ENCODE measurements at regions of chr11 and their contacts with region 1.

Region 1: DNA sequence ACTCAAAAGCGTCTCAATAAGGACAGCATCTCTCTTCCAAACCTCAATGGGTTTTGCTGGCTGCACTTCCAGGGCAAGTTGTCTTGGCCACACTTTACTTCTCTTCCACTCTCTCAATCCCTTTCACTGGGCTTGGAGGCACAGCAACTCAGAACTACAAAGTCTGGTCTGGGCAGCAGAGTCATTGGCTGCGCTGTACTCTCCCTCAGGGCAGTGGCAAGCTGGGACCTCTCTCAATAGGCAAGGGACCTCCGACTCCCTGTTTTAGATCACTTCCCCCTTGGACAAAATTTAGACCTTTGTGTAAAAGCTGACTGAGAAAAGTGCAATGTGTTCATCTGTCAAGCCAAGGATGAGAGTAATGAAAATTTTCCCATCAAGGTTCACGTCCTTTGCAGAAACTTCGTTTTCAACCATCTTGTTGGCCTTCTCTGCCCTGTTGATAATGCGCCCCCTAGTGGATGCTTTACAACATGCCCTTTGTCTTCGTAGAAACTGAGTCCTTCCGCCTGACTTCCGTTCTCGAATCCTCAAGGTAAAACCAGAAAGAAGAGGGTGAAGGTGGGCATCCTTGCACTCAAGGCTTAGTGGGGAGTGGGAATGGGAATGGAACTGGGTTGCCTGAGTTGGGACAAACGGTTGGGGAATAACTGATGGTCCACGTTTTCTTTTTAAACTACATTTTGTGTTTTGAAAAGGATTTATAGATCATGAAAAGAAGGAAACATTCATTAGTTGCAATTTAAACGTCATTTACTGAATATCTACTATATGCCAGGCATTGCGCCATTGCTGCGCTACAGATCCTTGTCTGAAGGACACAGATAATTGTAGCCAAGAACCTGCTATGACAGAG is 99.1 kb downstream of the CD44 start:
- DNase-seq: peak in 2 of 5 donors; percentile 21 to 30
- H3K4me3 ChIP-seq: no peak overlapping the region
- H3K27ac ChIP-seq: no peak overlapping the region
- H3K4me1 ChIP-seq: no peaks in the 10 kb centered on the region
- H3K27me3 ChIP-seq: no peaks in the 10 kb centered on the region
- CTCF ChIP-seq: peak in 2 of 3 donors; percentile 34 to 40
- EP300 ChIP-seq: no peak
- POLR2A ChIP-seq: no peak

Region 2: DNA sequence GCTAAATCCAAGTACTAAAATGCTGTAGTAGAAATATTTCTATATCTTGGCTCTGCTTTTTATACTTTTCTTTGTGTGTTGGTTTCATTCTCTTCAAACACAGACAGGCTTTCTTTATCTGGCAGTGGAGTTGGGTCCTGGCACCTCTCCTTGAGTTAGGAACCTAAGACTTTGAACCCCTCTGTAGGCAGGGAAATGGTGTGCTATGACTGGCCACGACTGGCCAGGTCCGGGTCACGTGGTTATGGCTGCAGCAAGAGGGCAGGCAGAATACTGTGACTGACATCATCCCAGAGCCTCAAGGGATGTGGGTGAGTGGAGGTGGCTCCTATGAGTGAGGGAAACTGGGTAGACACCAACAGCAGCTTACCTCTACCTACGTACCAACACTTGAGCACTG is 363.9 kb before region 1 on chr11:
- intact Hi-C with region 1: no loop called
- DNase-seq: no peak
- H3K4me3 ChIP-seq: no peak overlapping the region
- H3K27ac ChIP-seq: no peak overlapping the region
- H3K4me1 ChIP-seq: no peaks in the 10 kb centered on the region
- H3K27me3 ChIP-seq: no peaks in the 10 kb centered on the region
- CTCF ChIP-seq: no peak
- EP300 ChIP-seq: no peak
- POLR2A ChIP-seq: no peak

Region 3: DNA sequence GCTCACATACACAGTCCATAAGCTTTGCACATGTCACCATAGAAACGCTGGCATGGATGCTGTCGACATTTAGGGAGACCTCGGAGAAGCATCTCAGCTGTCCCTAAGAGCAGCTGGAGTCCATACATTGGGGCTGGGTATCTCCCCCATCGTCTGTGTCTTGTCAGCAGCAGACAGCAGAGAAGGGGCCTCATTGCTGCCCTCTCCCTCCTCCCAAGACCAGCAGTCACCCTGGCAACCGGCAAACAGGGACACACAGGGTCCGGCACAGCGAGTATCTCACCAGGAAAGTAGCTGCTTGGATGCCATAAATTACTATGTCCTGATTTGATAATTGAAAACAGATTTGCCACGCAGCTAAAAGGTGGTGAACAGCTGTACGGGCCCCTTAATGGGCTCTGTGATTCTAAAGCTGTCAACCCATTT is 14.7 kb before region 1 on chr11:
- intact Hi-C with region 1: loop called in 1 of 4 experiments (anchors 1 kb)
- DNase-seq: no peak
- H3K4me3 ChIP-seq: no peak overlapping the region
- H3K27ac ChIP-seq: no peak overlapping the region
- H3K4me1 ChIP-seq: no peaks in the 10 kb centered on the region
- H3K27me3 ChIP-seq: no peaks in the 10 kb centered on the region
- CTCF ChIP-seq: no peak
- EP300 ChIP-seq: no peak
- POLR2A ChIP-seq: no peak

Region 4: GRCh38 chr11:35321532-35322359 is 83.7 kb after region 1 on chr11:
- intact Hi-C with region 1: no loop called
- DNase-seq: no peak
- H3K4me3 ChIP-seq: no peak overlapping the region
- H3K27ac ChIP-seq: no peak overlapping the region
- H3K4me1 ChIP-seq: no peaks in the 10 kb centered on the region
- H3K27me3 ChIP-seq: no peaks in the 10 kb centered on the region
- CTCF ChIP-seq: no peak
- EP300 ChIP-seq: no peak
- POLR2A ChIP-seq: no peak

Region 5: DNA sequence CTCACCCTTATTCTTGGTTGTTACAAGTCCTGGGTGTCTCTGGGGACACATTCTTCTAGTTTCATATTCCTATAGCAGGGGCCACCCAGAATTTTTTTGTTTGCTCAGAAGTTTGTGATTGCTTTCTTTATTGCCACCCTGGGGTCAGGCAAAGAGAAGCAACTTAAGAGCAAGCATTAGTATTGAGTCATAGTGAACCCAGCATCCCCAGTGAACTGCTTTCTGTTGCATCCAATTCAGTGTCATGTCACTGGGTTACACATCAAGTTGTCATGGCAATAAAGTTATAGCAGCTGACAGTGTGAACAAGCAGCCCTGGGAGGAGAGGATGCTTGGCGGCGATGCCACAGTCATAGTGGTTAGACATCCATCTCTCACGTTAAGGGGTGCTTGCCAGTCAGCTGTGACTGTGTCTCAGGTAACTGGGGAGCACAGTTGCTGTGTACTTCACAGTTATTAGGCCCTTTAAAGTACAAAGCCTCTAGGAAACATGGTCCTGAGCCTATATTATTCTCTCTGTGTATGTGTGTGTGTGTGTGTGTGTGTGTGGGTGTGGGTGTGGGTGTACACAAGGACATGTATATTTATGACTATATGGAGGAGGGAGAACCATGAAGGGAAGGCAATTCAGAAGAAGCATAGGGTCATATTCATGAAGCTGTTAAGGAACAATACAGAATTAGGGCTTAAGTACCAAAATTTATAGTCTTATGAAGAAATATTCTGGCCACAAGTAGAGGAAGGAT is 477.0 kb after region 1 on chr11:
- intact Hi-C with region 1: no loop called
- DNase-seq: no peak
- H3K4me3 ChIP-seq: no peak overlapping the region
- H3K27ac ChIP-seq: no peak overlapping the region
- H3K4me1 ChIP-seq: peaks cover 3% of the 10 kb centered on the region
- H3K27me3 ChIP-seq: no peaks in the 10 kb centered on the region
- CTCF ChIP-seq: no peak
- EP300 ChIP-seq: no peak
- POLR2A ChIP-seq: no peak

Measured in ovary (tissue), 10 donors.